SK-N-SH (cell line): ENCODE measurements at regions of chr2 and their contacts with region 1.

Region 1: DNA sequence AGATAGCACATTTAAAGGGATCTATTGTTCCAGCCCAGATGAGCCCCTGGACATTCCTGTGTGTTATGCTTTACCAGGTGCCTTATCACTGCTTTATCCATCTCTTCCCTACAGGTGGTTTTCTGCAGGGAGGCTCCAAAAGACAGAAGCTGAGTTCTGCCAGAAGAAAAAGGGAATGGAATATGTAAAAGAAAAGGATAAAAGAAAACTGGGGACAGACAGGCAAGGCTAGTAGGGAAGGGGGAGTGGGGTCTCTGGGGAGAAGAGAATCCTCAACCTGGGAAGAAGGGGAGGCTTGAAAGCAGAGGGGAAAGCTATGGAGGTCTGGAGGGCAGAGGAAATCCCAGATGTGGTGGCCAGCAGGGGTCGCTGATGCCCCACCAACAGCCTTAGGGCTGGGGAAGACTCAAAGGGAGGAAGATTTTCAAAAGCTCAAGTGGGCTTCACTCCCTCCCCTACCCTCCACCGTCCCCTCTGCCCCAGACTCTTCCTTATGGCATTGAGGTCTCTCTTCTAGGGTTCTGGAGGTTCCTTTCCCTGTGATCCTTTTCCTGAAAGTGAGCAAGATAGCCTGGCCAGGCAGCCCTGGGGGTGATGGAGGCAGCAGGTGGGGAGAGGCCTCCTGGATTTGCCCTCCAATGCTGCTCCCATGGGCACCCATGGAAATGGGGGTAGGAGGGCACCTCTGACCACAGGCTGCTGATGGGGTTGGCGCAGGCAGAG is 178.1 kb upstream of the PKDCC start:
- DNase-seq: peak; percentile 86
- H3K4me3 ChIP-seq: no peak overlapping the region; a peak in 1 of 4 replicates
- H3K27ac ChIP-seq: peak overlapping the region in 1 of 2 experiments; percentile 39; a peak in 1 of 4 replicates
- H3K4me1 ChIP-seq: peaks cover 0 to 26% of the 10 kb centered on the region in 2 experiments; a peak in 3 of 4 replicates
- H3K27me3 ChIP-seq: no peaks in the 10 kb centered on the region
- CTCF ChIP-seq: peak; percentile 91
- EP300 ChIP-seq: 0 out of 4 replicates have a peak, but pooled peaks of 1 of the 2 experiments have one; percentile 16
- RAD21 ChIP-seq: peak; percentile 100

Region 2: DNA sequence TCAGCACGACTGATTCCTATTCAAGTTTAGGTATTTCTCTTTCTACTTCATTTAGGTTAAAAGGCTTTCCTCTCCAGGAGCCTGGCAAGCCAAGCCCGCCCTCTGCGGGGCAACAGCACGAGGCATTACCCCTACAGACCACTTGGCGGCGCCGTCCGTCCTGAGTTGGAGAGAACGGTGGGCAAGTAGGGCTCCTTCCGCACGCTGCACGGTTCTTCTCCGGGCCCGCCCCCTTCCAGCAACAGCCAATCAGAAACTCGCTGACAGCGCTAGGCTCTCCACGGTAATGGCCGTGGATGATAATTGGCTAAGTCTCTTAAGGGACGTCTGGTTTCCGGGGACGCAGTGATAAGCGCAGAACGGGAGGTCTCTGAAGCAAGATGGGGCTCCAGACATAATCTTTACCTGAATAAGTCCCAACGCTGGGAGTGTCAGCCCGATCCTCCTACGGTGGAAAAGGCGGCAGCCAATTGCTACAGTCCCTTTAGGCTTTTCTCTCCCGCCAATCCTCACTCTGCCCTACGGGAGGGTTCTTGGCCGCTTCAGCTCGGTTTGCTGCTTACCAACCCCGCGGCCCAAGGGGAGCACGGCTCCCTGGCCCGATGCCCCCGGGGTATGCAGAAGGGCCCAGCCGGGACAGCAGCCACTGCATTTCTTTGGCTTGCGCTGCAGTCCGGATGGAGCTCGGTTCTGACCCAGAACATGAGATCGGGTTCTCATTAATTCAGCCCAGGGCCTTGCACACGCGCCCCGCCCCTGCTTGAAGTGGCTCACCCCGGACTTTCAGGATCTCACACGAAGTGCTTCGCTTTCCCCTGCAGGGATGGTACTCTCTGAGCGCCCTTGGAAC is 28.8 kb before region 1 on chr2:
- CTCF ChIA-PET with region 1: interaction called, 45 read pairs
- POLR2A ChIA-PET with region 1: no interaction called
- DNase-seq: peak; percentile 96
- H3K4me3 ChIP-seq: peak overlapping the region; percentile 79 to 98
- H3K27ac ChIP-seq: peak overlapping the region; percentile 9 to 91; a peak in 3 of 4 replicates
- H3K4me1 ChIP-seq: peaks cover 0 to 10% of the 10 kb centered on the region in 2 experiments; a peak in 2 of 4 replicates
- H3K27me3 ChIP-seq: no peaks in the 10 kb centered on the region; the same call in 1 of the 2 replicates
- CTCF ChIP-seq: peak; percentile 99
- EP300 ChIP-seq: peak in 1 of 2 experiments; percentile 40; a peak in 1 of 4 replicates
- RAD21 ChIP-seq: peak; percentile 90

Region 3: DNA sequence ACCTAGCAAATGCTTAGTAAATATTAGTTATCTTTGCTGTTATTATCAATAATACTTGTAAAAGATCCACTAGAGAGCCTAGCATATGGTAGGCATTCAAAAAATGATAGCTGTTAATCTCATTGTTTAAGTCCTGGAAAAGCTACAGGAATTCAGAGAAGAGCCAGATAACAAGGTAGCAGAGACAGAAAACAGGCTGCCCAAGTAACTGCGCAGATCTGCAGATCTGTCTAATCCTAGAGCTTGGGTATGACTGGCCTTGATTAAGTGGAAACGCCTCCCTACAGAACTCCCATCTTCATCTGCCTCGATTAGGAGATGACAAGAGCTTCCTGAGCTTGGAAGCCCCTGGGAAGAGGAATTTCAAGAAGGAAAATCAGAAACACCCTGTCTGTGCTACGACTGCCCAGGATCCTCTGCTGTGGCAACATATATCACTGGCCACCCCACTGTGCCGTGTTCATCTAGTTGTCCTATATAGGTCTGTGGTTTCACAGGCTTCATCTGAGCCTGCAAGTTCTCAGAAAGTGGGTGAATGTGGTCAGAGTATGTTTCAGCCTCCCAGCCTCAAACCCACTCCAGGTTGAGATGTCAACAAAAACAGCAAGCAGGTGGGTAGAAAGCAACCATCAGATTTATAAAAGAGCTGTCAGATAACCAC is 26.6 kb after region 1 on chr2:
- CTCF ChIA-PET with region 1: interaction called, 31 read pairs
- POLR2A ChIA-PET with region 1: no interaction called
- DNase-seq: no peak
- H3K4me3 ChIP-seq: no peak overlapping the region
- H3K27ac ChIP-seq: peak overlapping the region in 1 of 2 experiments; percentile 69; a peak in 2 of 4 replicates
- H3K4me1 ChIP-seq: peaks cover 0 to 23% of the 10 kb centered on the region in 2 experiments; a peak in 2 of 4 replicates
- H3K27me3 ChIP-seq: peaks cover 39% of the 10 kb centered on the region; the same call in 1 of the 2 replicates
- CTCF ChIP-seq: no peak
- EP300 ChIP-seq: peak in 1 of 2 experiments; percentile 80; a peak in 2 of 4 replicates
- RAD21 ChIP-seq: no peak

Region 4: DNA sequence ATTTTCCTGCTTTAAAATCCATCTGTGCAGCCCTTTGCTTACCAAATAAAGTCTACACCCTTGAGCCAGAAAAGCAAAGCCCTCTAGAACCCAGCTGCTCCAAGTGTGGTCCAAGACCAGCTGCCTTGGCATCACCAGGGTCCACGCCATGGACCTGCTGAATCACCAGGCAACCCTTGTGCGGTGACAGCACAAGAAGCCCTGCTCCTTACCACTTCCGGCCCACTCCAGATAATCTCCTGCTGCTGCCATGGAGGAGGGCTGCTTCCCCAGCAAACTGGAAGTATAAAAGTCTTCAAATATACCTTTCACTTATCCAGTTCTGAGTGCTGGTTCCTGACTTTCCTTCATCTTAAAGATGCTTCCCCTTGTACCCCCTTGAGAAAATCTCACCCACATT is 72.1 kb after region 1 on chr2:
- CTCF ChIA-PET with region 1: interaction called, 15 read pairs
- POLR2A ChIA-PET with region 1: no interaction called
- DNase-seq: no peak
- H3K4me3 ChIP-seq: no peak overlapping the region
- H3K27ac ChIP-seq: no peak overlapping the region
- H3K4me1 ChIP-seq: peaks cover 16 to 19% of the 10 kb centered on the region in 2 experiments; a peak in 3 of 4 replicates
- H3K27me3 ChIP-seq: no peaks in the 10 kb centered on the region
- CTCF ChIP-seq: no peak
- EP300 ChIP-seq: no peak
- RAD21 ChIP-seq: no peak

Region 5: DNA sequence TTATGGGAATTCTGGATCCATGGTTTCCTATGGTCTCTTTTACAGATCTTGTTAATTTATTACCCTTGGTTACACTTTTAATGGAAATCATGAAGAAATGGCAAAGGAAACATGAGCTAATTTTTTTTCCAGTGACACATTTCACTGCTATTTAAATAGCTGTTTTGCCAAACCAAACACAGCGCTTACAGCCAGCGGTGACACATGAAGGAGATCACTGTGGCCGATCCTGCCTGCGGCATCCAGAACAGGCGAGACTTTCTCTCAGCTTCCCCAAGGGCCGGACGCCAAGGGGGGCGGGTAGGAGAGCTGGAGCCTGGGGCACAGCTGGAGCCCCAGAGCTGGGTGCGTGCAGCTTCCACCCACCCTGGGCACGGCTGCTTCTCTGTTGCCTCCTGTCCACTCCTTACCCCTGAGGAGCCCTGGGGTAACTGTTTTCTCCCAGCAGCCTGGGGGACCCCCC is 96.8 kb after region 1 on chr2:
- CTCF ChIA-PET with region 1: interaction called, 30 read pairs
- POLR2A ChIA-PET with region 1: interaction called, 4 read pairs
- DNase-seq: no peak
- H3K4me3 ChIP-seq: no peak overlapping the region
- H3K27ac ChIP-seq: peak overlapping the region in 1 of 2 experiments; percentile 56; a peak in 1 of 4 replicates
- H3K4me1 ChIP-seq: peaks cover 23 to 52% of the 10 kb centered on the region in 2 experiments
- H3K27me3 ChIP-seq: no peaks in the 10 kb centered on the region
- CTCF ChIP-seq: no peak
- EP300 ChIP-seq: no peak
- RAD21 ChIP-seq: no peak

Region 6: DNA sequence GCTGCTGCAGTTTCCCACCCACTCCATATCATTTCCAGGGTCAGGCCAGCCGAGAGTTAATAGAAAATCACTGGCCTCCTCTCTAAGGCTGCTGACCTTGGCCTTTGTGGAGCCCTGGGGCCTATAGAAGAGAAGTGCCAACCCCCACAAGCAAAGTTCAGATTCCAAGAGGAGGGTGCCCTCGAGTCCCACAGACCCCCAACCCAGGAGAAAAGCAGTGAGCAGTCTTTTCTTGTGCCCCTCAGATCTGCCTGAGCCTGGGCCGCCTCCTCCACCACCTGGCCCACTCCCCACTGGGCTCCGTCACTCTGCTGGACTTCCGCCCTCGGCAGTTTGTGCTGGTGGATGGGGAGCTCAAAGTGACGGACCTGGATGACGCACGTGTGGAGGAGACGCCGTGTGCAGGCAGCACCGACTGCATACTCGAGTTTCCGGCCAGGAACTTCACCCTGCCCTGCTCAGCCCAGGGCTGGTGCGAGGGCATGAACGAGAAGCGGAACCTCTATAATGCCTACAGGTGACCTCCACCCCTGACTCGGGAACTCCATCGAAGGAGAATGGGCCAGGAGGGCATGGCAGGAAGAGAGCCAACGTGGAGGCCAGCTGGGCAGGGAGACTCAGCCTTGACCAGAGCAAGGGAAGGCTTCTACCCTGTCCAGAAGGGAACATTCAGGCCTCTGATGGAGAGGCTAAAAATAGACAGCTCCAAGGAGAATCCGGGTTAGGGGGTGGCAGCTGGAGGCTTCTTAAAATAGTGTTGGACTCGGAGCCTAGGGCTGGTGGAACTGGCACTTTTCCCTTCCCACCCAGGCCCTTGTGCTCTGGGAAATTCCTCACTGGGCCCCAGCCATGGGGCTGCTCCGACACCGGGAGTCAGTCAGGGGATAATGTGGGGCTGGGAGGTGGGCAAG is 184.3 kb after region 1 on chr2:
- CTCF ChIA-PET with region 1: interaction called, 193 read pairs
- POLR2A ChIA-PET with region 1: interaction called, 3 read pairs
- DNase-seq: no peak
- H3K4me3 ChIP-seq: no peak overlapping the region
- H3K27ac ChIP-seq: no peak overlapping the region
- H3K4me1 ChIP-seq: peaks cover 0 to 35% of the 10 kb centered on the region in 2 experiments; a peak in 1 of 4 replicates
- H3K27me3 ChIP-seq: no peaks in the 10 kb centered on the region
- CTCF ChIP-seq: no peak
- EP300 ChIP-seq: no peak
- RAD21 ChIP-seq: no peak

Region 7: DNA sequence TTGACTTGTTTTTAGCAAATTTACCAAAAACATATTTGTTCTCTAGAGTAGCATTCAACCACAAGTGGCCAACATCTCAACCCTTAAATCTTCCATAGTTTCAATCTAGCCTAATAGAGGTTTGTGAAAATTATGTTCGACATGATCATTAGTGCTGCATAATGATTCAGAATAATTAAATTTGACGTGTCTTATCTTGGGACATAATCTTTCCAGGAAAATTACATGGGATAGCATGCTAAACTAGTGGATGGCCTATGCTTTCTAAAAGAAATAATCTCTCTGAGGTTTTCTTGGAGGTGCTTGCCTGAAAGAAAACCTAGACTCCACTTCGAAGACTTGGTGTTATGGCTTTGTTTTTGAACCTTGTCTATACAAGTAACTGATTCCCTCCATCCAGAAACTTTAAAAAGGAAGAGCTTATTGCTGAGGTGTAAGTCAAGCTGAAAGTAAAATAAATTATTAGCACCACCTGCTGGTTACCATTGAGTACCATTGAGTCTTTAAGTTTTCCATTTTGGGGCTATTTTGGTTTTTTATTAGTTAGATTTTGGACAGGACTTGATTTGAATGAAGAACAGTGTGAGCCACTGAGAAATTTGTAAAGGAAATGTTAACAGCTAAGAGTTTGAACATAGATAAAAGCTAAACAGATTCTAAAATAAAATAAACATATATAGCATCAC is 458.6 kb after region 1 on chr2:
- CTCF ChIA-PET with region 1: interaction called, 13 read pairs
- POLR2A ChIA-PET with region 1: no interaction called
- DNase-seq: no peak
- H3K4me3 ChIP-seq: no peak overlapping the region
- H3K27ac ChIP-seq: peak overlapping the region in 1 of 2 experiments; percentile 34; a peak in 2 of 4 replicates
- H3K4me1 ChIP-seq: no peaks in the 10 kb centered on the region; a peak in 1 of 4 replicates
- H3K27me3 ChIP-seq: no peaks in the 10 kb centered on the region
- CTCF ChIP-seq: peak; percentile 82
- EP300 ChIP-seq: no peak
- RAD21 ChIP-seq: peak; percentile 70

Region 8: GRCh38 chr2:42464631-42465030 is 594.9 kb after region 1 on chr2:
- CTCF ChIA-PET with region 1: no interaction called
- POLR2A ChIA-PET with region 1: no interaction called
- DNase-seq: no peak
- H3K4me3 ChIP-seq: no peak overlapping the region
- H3K27ac ChIP-seq: no peak overlapping the region
- H3K4me1 ChIP-seq: no peaks in the 10 kb centered on the region; a peak in 1 of 4 replicates
- H3K27me3 ChIP-seq: no peaks in the 10 kb centered on the region
- CTCF ChIP-seq: no peak
- EP300 ChIP-seq: no peak
- RAD21 ChIP-seq: no peak